ENCODE measurements at regions of chr18 and their contacts with region 1.

Region 1: DNA sequence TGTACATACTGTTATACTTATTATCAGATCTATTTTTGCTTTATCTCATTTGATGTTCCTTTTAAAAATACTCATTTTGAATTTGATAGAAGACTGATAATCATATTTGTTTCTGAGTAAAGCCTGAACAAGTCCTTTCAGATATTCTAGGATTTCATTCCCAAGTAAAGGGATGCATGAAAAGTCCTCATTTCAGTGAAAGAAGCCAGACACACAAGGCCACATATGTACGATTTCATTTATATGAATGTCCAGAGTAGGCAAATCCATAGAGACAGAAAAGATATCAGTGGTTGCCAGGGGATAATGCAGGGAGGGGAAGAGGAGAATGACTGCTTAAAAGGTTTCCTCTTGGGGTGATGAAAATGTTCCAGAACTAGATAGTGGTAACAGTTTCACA is 53.4 kb downstream of the DSC3 start:
- DNase-seq: no peak
- ATAC-seq: no peak
- H3K4me3 ChIP-seq: no peak overlapping the region
- H3K27ac ChIP-seq: no peak overlapping the region
- H3K4me1 ChIP-seq: no peaks in the 10 kb centered on the region
- H3K27me3 ChIP-seq: no peaks in the 10 kb centered on the region
- CTCF ChIP-seq: no peak
- POLR2A ChIP-seq: no peak
- RAD21 ChIP-seq: no peak

Region 2: GRCh38 chr18:30746224-30746623 is 242.9 kb before region 1 on chr18:
- CTCF ChIA-PET with region 1: no interaction called
- POLR2A ChIA-PET with region 1: no interaction called
- dilution Hi-C with region 1: no loop called
- in situ Hi-C with region 1: no loop called
- intact Hi-C with region 1: no loop called
- DNase-seq: no peak
- ATAC-seq: no peak
- H3K4me3 ChIP-seq: no peak overlapping the region
- H3K27ac ChIP-seq: no peak overlapping the region
- H3K4me1 ChIP-seq: no peaks in the 10 kb centered on the region
- H3K27me3 ChIP-seq: no peaks in the 10 kb centered on the region
- CTCF ChIP-seq: no peak
- POLR2A ChIP-seq: no peak
- RAD21 ChIP-seq: no peak

Region 3: DNA sequence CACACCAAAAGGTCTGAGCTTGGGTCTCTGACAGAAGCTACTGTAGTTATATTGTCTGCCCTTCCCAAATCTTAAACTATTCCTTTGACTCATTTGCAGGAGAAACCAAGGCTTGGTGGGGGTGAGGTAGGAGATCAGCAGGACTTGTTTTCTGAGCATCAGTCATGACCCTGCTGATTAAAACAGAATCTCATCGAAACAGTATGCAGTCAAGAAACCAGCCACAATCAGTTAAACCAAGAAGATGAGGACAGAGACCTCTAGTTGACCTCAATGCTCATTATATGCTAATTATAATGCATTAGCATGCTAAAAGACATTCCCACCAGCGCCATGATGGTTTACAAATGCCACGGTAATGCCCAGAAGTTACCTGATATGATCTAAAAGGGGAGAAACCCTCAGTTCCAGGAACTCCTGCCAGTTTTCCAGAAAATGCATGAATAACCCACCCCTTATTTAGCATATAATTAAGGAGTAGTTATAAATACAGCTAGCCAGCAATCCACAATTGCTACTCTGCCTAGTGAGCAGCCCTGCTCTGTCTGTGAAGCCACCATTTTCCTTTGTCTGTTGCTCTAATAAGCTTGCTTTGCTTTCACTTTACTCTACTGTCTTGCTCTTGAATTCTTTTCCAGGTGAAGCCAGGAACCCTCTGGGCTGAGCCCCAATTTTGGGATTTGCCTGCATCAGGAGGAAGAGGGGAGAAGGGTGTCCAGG is 26.7 kb after region 1 on chr18:
- CTCF ChIA-PET with region 1: no interaction called
- POLR2A ChIA-PET with region 1: no interaction called
- dilution Hi-C with region 1: no loop called
- in situ Hi-C with region 1: no loop called
- intact Hi-C with region 1: loop called (anchors 1 kb)
- DNase-seq: no peak
- ATAC-seq: no peak
- H3K4me3 ChIP-seq: no peak overlapping the region
- H3K27ac ChIP-seq: no peak overlapping the region
- H3K4me1 ChIP-seq: no peaks in the 10 kb centered on the region
- H3K27me3 ChIP-seq: no peaks in the 10 kb centered on the region
- CTCF ChIP-seq: no peak
- POLR2A ChIP-seq: no peak
- RAD21 ChIP-seq: no peak

Measured in IMR-90 (cell line).